ENCODE measurements at regions of chr3 and their contacts with region 1.

Region 1: GRCh38 chr3:126982471-126983175 is at the start of gene PLXNA1:
- DNase-seq: peak; percentile 88 to 97 (median 95)
- H3K4me3 ChIP-seq: peak within 1 kb of the TSS; percentile 61 to 76
- H3K4me3 Mint-ChIP-seq: peak within 1 kb of the TSS; percentile 84 to 92 (median 89)
- H3K27ac ChIP-seq: peak within 1 kb of the TSS; percentile 83
- H3K27ac Mint-ChIP-seq: peak within 1 kb of the TSS; percentile 95 to 98 (median 97)
- H3K4me1 ChIP-seq: peaks cover 17% of the 10 kb centered on the region
- H3K4me1 Mint-ChIP-seq: peaks cover 6 to 29% (median 17%) of the 10 kb centered on the region in 4 donors
- H3K27me3 ChIP-seq: no peaks in the 10 kb centered on the region
- H3K27me3 Mint-ChIP-seq: peaks cover 5 to 7% of the 10 kb centered on the region in 2 donors
- total RNA-seq, gene PLXNA1: 18.9 to 21.3 TPM

Region 2: GRCh38 chr3:126679318-126679751 is 303.3 kb before region 1 on chr3:
- CTCF ChIA-PET with region 1: interaction called, 8 read pairs
- POLR2A ChIA-PET with region 1: no interaction called
- intact Hi-C with region 1: loop called (anchors 1 kb)
- DNase-seq: peak; percentile 58 to 73 (median 65)
- H3K4me3 ChIP-seq: no peak overlapping the region
- H3K4me3 Mint-ChIP-seq: peak overlapping the region in 5 of 8 donors; percentile 5 to 71 (median 55)
- H3K27ac ChIP-seq: no peak overlapping the region
- H3K27ac Mint-ChIP-seq: no peak overlapping the region
- H3K4me1 ChIP-seq: peaks cover 3% of the 10 kb centered on the region
- H3K4me1 Mint-ChIP-seq: peaks cover 0 to 8% (median 3%) of the 10 kb centered on the region in 4 donors
- H3K27me3 ChIP-seq: no peaks in the 10 kb centered on the region
- H3K27me3 Mint-ChIP-seq: peaks cover 8 to 28% of the 10 kb centered on the region in 2 donors

Region 3: GRCh38 chr3:126911162-126912026 is 71.2 kb before region 1 on chr3:
- CTCF ChIA-PET with region 1: interaction called, 7 read pairs
- POLR2A ChIA-PET with region 1: interaction called, 11 read pairs
- intact Hi-C with region 1: loop called (anchors 1 kb)
- DNase-seq: peak; percentile 60 to 88 (median 70)
- H3K4me3 ChIP-seq: peak overlapping the region in 1 of 2 donors; percentile 22
- H3K4me3 Mint-ChIP-seq: peak overlapping the region in 7 of 8 donors; percentile 36 to 88 (median 74)
- H3K27ac ChIP-seq: peak overlapping the region; percentile 43
- H3K27ac Mint-ChIP-seq: peak overlapping the region; percentile 86 to 94 (median 92)
- H3K4me1 ChIP-seq: peaks cover 57% of the 10 kb centered on the region
- H3K4me1 Mint-ChIP-seq: peaks cover 28 to 49% (median 37%) of the 10 kb centered on the region in 4 donors
- H3K27me3 ChIP-seq: no peaks in the 10 kb centered on the region
- H3K27me3 Mint-ChIP-seq: no peaks in the 10 kb centered on the region

Region 4: GRCh38 chr3:126939338-126939718 is 43.3 kb before region 1 on chr3:
- CTCF ChIA-PET with region 1: no interaction called
- POLR2A ChIA-PET with region 1: no interaction called
- intact Hi-C with region 1: no loop called
- DNase-seq: no peak
- H3K4me3 ChIP-seq: no peak overlapping the region
- H3K4me3 Mint-ChIP-seq: no peak overlapping the region
- H3K27ac ChIP-seq: no peak overlapping the region
- H3K27ac Mint-ChIP-seq: no peak overlapping the region
- H3K4me1 ChIP-seq: no peaks in the 10 kb centered on the region
- H3K4me1 Mint-ChIP-seq: peaks cover 0 to 1% (median under 1%) of the 10 kb centered on the region in 4 donors
- H3K27me3 ChIP-seq: no peaks in the 10 kb centered on the region
- H3K27me3 Mint-ChIP-seq: no peaks in the 10 kb centered on the region

Region 5: DNA sequence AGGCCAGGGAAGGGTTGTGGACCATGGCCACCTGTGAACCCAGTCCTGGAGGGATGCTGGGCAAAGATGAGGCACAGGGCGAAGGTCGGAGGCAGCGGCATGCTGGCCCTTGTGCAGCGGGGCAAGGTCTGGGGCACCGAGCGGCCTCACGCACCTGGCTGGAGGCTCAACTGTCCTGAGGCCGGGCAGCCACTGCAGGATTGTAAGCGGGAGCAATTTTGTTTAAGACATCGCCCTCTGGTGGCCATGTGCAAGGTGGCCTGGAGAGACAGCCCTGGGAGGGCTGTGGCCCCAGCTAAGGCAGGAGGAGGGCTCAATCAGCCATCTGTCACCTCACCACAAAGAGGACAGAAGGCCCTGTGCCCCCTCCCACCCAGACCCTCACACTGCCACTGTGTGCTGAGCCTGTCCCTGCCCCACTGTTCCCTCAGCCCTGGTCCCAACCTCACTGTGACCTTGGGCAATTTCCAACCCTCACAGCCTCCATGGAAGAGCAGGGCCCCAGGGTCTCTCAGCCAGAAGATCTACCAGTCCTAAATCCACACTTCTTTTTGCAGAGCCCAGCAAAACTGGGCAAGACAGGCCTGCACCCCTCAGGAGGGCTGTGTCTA is 561.7 kb after region 1 on chr3:
- CTCF ChIA-PET with region 1: interaction called, 3 read pairs
- POLR2A ChIA-PET with region 1: no interaction called
- intact Hi-C with region 1: loop called (anchors 5 kb)
- DNase-seq: peak; percentile 49 to 56 (median 50)
- H3K4me3 ChIP-seq: no peak overlapping the region
- H3K4me3 Mint-ChIP-seq: no peak overlapping the region
- H3K27ac ChIP-seq: no peak overlapping the region
- H3K27ac Mint-ChIP-seq: peak overlapping the region in 1 of 7 donors; percentile 10
- H3K4me1 ChIP-seq: peaks cover 14% of the 10 kb centered on the region
- H3K4me1 Mint-ChIP-seq: peaks cover 3 to 25% (median 11%) of the 10 kb centered on the region in 4 donors
- H3K27me3 ChIP-seq: no peaks in the 10 kb centered on the region
- H3K27me3 Mint-ChIP-seq: peaks cover 1 to 3% of the 10 kb centered on the region in 2 donors